WTC11 (cell line): ENCODE measurements at regions of chr19 and their contacts with region 1.

Region 1: DNA sequence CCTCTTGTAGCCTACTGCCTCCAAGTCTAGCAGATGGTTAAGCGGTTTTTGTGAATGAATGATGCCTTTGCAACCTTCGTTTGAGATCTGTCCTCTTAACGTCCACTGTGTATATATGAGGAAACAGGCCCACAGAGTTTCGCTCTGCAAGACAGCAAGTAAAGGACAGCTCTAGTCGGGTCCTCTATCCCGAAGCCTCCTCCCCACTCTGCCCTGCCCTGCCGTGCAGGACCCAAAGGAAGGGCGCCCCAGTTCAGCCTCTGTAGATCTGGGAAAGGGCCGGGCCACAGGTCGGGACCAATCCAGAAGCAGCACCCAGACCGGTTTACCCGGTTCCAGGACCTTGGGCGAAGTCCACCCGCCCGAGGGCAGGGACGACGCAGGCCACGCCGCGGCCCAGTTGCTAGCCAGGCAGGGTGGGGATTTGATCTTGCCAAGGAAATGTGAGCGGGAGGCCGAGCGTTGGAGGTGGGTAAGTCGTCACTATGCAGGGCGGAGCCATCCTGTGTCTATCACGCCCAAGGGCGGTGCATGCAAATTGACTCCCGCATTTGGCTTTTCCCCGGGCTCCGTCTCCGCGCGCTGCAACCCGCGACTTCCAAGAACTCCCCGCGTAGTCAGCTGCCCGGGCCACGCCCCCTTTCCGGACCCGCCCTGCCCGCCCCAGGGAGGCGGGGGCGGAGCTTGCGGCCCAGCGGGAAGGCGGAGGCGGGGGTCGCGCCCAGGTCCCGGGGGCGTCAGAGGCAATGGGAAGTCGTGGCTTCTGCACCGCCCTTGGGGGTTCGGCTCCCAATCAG is 12.5 kb downstream of the IER2 start:
- DNase-seq: peak; percentile 96
- ATAC-seq: peak; percentile 55
- H3K4me3 Mint-ChIP-seq: peak overlapping the region; percentile 72
- H3K27ac Mint-ChIP-seq: peak overlapping the region; percentile 99
- H3K4me1 Mint-ChIP-seq: peaks cover 55% of the 10 kb centered on the region
- H3K27me3 Mint-ChIP-seq: no peaks in the 10 kb centered on the region
- CTCF ChIP-seq: no peak

Region 2: GRCh38 chr19:13078897-13079541 is 83.7 kb before region 1 on chr19:
- CTCF ChIA-PET with region 1: no interaction called
- POLR2A ChIA-PET with region 1: no interaction called
- DNase-seq: no peak
- ATAC-seq: no peak
- H3K4me3 Mint-ChIP-seq: no peak overlapping the region
- H3K27ac Mint-ChIP-seq: no peak overlapping the region
- H3K4me1 Mint-ChIP-seq: peaks cover 42% of the 10 kb centered on the region
- H3K27me3 Mint-ChIP-seq: peaks cover 37% of the 10 kb centered on the region
- CTCF ChIP-seq: no peak

Region 3: DNA sequence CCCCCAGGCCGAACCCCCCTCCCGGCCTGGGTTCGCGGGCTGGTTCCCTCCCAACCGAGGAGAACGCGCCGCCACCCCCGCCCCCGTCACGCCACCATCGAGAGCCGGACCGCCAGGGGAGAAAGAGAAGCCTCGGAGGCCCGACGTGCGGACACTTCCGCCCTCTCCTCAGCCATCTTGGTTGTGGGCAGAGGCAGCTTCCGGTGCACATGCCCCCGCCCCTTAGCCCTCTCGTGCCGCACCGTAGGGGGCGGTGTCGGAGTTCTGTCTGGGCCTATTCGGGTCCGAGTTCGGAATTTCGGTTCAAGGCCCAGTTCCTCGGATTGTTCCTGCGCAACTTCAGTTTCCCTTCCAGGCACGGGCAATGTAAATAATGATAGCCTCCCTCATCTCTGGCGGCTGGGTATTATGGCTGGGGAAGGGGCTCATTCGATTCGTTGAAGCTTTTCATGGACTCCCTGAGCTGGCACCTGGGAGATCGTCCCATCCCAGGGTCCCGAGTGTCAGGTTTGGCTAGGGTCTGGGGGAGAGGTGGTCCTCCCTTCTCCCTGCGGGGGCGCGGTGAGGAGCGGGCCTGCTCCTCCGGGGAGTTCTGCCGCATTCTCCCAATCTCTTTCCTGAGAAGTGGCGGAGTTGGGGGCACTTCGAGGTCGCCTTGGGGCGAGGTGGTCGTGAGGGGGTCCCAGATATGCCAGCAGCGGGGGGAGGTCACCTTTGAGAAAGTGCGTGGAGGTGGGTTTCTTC is 12.4 kb before region 1 on chr19 and contains the starts of genes IER2 and STX10:
- CTCF ChIA-PET with region 1: interaction called, 12 read pairs
- POLR2A ChIA-PET with region 1: interaction called, 167 read pairs
- DNase-seq: peak; percentile 90
- ATAC-seq: peak; percentile 18
- H3K4me3 Mint-ChIP-seq: peak within 1 kb of the TSS; percentile 99
- H3K27ac Mint-ChIP-seq: peak within 1 kb of the TSS; percentile 99
- H3K4me1 Mint-ChIP-seq: peaks cover 13% of the 10 kb centered on the region
- H3K27me3 Mint-ChIP-seq: peaks cover 7% of the 10 kb centered on the region; the same call in 1 of the 2 replicates
- CTCF ChIP-seq: no peak
- total RNA-seq, gene IER2: 138 to 154 TPM (median 150 TPM) in 3 replicates
- total RNA-seq, gene STX10: 53.7 to 56.9 TPM (median 54.6 TPM) in 3 replicates